ENCODE measurements at regions of chr12 and their contacts with region 1.

Region 1: GRCh38 chr12:22551624-22552023 is 7.3 kb upstream of the C2CD5 start:
- DNase-seq: no peak
- CTCF ChIP-seq: no peak

Region 2: GRCh38 chr12:22562036-22563028 is 10.7 kb after region 1 on chr12:
- CTCF ChIA-PET with region 1: interaction called, 12 read pairs
- POLR2A ChIA-PET with region 1: no interaction called
- DNase-seq: no peak
- CTCF ChIP-seq: no peak

Measured in GM10248 (cell line).